GM13977 (cell line): ENCODE measurements at regions of chr11 and their contacts with region 1.

Region 1: DNA sequence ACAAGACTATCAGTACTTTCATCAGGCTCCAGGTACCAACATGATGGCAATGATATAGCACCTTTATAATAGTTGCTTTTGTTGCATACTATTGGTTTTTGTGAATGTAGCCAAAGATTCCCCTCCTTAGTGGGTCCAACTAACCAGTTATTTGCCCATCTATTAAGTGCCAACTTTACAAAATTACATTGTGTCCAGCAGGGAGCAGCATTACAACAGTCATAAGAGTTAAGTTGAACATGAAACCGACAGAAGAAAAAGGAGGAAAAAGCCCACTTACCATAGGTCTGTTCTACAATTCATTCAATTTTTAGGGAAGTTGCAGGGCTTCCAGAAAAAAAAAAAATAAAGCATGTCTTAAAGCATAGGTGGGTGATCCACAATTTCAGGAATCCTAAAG is 21.6 kb downstream of the IMMP1L start:
- DNase-seq: no peak
- CTCF ChIP-seq: peak; percentile 40

Region 2: GRCh38 chr11:31798554-31799434 is 310.9 kb after region 1 on chr11:
- in situ Hi-C with region 1: loop called (anchors 25 kb)
- DNase-seq: peak; percentile 81
- CTCF ChIP-seq: peak; percentile 61